Spleen (tissue), 13 donors: ENCODE measurements at regions of chr6 and their contacts with region 1.

Region 1: GRCh38 chr6:96645106-96645505 is 82.2 kb downstream of the FHL5 start:
- DNase-seq: no peak
- H3K4me3 ChIP-seq: no peak overlapping the region
- H3K27ac ChIP-seq: no peak overlapping the region
- H3K4me1 ChIP-seq: no peaks in the 10 kb centered on the region
- H3K27me3 ChIP-seq: peaks cover 0 to 4% (median 0%) of the 10 kb centered on the region in 7 donors
- CTCF ChIP-seq: no peak
- POLR2A ChIP-seq: no peak

Region 2: DNA sequence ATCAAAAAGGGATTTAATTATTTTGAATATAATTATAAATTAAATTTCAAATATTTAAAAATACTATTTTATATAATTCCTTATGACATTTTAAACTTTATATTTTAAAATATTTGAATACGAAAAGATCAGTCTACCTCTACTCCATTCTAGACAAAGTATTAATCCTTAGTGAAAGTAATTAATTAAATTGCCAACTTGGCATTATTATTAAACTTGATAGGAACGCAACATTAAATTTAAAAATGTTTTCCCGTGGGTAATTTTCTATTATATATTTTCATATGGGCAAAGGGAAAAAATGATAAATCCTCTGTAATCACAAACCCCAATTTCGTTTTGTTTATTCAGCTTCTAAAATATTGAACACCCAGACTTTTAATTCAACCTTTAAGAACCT is 90.5 kb before region 1 on chr6:
- intact Hi-C with region 1: no loop called
- DNase-seq: no peak
- H3K4me3 ChIP-seq: no peak overlapping the region
- H3K27ac ChIP-seq: no peak overlapping the region
- H3K4me1 ChIP-seq: no peaks in the 10 kb centered on the region
- H3K27me3 ChIP-seq: no peaks in the 10 kb centered on the region
- CTCF ChIP-seq: no peak
- POLR2A ChIP-seq: no peak

Region 3: GRCh38 chr6:96626759-96627364 is 18.2 kb before region 1 on chr6:
- intact Hi-C with region 1: loop called (anchors 1 kb)
- DNase-seq: no peak
- H3K4me3 ChIP-seq: no peak overlapping the region
- H3K27ac ChIP-seq: no peak overlapping the region
- H3K4me1 ChIP-seq: peaks cover 0 to 4% (median 0%) of the 10 kb centered on the region in 6 donors
- H3K27me3 ChIP-seq: no peaks in the 10 kb centered on the region
- CTCF ChIP-seq: peak in 7 of 11 experiments; percentile 17 to 53 (median 31)
- POLR2A ChIP-seq: no peak